CD8-positive, alpha-beta T cell (primary cell): ENCODE measurements at regions of chr15 and their contacts with region 1.

Region 1: GRCh38 chr15:101258238-101259144 is 6.6 kb upstream of the CHSY1 start:
- DNase-seq: peak in 7 of 9 experiments; percentile 43 to 80 (median 60)
- ATAC-seq: peak; percentile 71
- H3K4me3 ChIP-seq: no peak overlapping the region
- H3K4me3 Mint-ChIP-seq: no peak overlapping the region
- H3K27ac ChIP-seq: no peak overlapping the region
- H3K27ac Mint-ChIP-seq: no peak overlapping the region
- H3K4me1 ChIP-seq: no peaks in the 10 kb centered on the region
- H3K4me1 Mint-ChIP-seq: peaks cover 2% of the 10 kb centered on the region
- H3K27me3 ChIP-seq: no peaks in the 10 kb centered on the region
- H3K27me3 Mint-ChIP-seq: peaks cover 15% of the 10 kb centered on the region
- CTCF ChIP-seq: peak; percentile 90

Region 2: GRCh38 chr15:100627789-100628395 is 630.6 kb before region 1 on chr15:
- CTCF ChIA-PET with region 1: interaction called, 3 read pairs
- POLR2A ChIA-PET with region 1: interaction called, 4 read pairs
- intact Hi-C with region 1: loop called in 1 of 2 experiments (anchors 2 kb)
- DNase-seq: peak; percentile 27 to 81 (median 65)
- ATAC-seq: peak; percentile 96
- H3K4me3 ChIP-seq: no peak overlapping the region
- H3K4me3 Mint-ChIP-seq: no peak overlapping the region
- H3K27ac ChIP-seq: no peak overlapping the region
- H3K27ac Mint-ChIP-seq: no peak overlapping the region
- H3K4me1 ChIP-seq: no peaks in the 10 kb centered on the region
- H3K4me1 Mint-ChIP-seq: peaks cover 31% of the 10 kb centered on the region
- H3K27me3 ChIP-seq: no peaks in the 10 kb centered on the region
- H3K27me3 Mint-ChIP-seq: no peaks in the 10 kb centered on the region
- CTCF ChIP-seq: peak; percentile 81

Region 3: DNA sequence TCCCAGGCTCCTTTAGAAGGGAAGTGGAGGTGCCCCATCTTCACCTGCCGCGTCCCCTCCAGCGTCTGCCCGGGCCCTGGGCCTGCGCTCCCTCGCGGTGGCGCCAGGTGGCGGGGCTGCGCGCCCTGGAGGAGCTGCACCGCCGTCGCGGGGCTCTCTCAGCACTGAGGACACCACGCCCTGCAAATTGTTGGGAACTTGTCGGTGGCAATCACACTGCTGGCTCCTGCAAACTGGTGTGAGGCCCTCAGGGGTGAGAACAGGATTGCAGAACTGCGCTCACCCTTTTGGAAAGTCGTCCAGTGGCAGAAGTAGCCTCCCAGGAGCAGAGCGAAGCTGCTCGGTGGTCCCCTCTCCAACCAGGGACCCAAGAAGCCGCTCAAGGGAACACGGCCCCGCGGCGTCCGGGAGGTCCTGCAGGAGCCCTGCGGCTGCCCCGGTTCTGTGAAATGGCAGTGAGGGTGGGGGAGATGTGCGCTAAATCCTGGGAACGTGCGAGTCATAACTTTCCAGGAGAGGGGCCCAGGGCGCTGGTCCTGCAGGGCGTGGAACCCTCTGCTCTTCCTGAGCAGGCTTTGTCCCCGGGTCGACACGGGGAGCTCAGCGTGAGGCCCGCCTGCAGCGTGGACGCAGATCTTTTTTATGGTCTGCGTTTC is 340.3 kb before region 1 on chr15:
- CTCF ChIA-PET with region 1: interaction called, 4 read pairs
- POLR2A ChIA-PET with region 1: no interaction called
- intact Hi-C with region 1: loop called in 1 of 2 experiments (anchors 5 kb)
- DNase-seq: peak; percentile 24 to 72 (median 56)
- ATAC-seq: peak; percentile 95
- H3K4me3 ChIP-seq: peak overlapping the region; percentile 33 to 67
- H3K4me3 Mint-ChIP-seq: peak overlapping the region; percentile 83
- H3K27ac ChIP-seq: no peak overlapping the region
- H3K27ac Mint-ChIP-seq: no peak overlapping the region
- H3K4me1 ChIP-seq: peaks cover 8% of the 10 kb centered on the region
- H3K4me1 Mint-ChIP-seq: peaks cover 18% of the 10 kb centered on the region
- H3K27me3 ChIP-seq: peaks cover 0 to 14% of the 10 kb centered on the region in 2 experiments
- H3K27me3 Mint-ChIP-seq: peaks cover 66% of the 10 kb centered on the region
- CTCF ChIP-seq: peak; percentile 71

Region 4: DNA sequence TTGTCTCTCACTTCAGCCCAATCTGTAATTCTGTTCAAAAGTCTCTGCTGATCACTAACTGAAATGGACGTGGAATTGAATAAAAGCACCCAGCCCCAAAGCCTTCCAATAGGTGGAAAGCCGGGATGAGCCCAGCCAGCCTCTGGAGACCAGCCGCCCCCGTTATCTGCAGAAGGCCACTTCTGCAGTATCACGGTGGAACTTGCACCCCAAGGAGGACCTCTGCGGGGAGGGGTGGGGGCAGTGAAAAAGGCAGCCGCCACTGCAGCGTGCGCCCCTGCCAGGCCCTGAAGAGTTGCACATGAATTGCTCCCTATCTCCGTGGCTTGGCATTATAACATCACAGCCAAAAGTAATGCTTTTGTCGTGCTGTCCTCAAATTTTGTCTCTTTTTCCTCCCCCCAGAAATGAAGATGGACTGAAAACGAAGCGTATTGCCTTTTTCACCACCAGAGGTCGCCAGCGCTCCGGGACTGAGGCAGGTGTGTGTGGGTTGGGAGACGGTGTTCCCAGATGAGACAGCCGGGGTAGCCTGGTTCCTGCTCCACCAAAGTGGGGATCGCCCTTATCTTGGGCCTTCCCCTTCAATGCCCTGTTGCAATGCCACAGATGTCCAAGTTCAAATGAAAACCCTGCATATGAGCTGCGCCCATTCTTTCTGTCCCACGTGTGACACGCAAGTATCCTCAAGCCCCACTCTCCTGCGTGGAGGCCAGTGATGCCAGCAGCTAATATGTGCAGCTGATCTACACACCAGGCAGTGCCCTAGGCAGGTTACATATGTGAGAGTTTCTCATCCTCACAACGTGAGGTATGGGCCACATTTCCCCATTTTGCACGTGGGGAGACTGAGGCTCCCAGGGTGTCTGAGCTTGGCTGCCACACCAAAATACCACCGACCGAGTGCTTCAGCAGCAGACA is 243.3 kb before region 1 on chr15:
- CTCF ChIA-PET with region 1: interaction called, 22 read pairs
- POLR2A ChIA-PET with region 1: no interaction called
- intact Hi-C with region 1: loop called (anchors 1 kb)
- DNase-seq: peak; percentile 17 to 78 (median 68)
- ATAC-seq: peak; percentile 42
- H3K4me3 ChIP-seq: no peak overlapping the region
- H3K4me3 Mint-ChIP-seq: no peak overlapping the region
- H3K27ac ChIP-seq: no peak overlapping the region
- H3K27ac Mint-ChIP-seq: no peak overlapping the region
- H3K4me1 ChIP-seq: no peaks in the 10 kb centered on the region
- H3K4me1 Mint-ChIP-seq: no peaks in the 10 kb centered on the region
- H3K27me3 ChIP-seq: no peaks in the 10 kb centered on the region
- H3K27me3 Mint-ChIP-seq: peaks cover 9% of the 10 kb centered on the region
- CTCF ChIP-seq: peak; percentile 73

Region 5: GRCh38 chr15:101088788-101089583 is 169.5 kb before region 1 on chr15:
- CTCF ChIA-PET with region 1: interaction called, 173 read pairs
- POLR2A ChIA-PET with region 1: no interaction called
- intact Hi-C with region 1: loop called (anchors 1 kb)
- DNase-seq: peak; percentile 64 to 89 (median 76)
- ATAC-seq: peak; percentile 98
- H3K4me3 ChIP-seq: no peak overlapping the region
- H3K4me3 Mint-ChIP-seq: no peak overlapping the region
- H3K27ac ChIP-seq: no peak overlapping the region
- H3K27ac Mint-ChIP-seq: no peak overlapping the region
- H3K4me1 ChIP-seq: no peaks in the 10 kb centered on the region
- H3K4me1 Mint-ChIP-seq: peaks cover 1% of the 10 kb centered on the region
- H3K27me3 ChIP-seq: no peaks in the 10 kb centered on the region
- H3K27me3 Mint-ChIP-seq: no peaks in the 10 kb centered on the region
- CTCF ChIP-seq: peak; percentile 98

Region 6: DNA sequence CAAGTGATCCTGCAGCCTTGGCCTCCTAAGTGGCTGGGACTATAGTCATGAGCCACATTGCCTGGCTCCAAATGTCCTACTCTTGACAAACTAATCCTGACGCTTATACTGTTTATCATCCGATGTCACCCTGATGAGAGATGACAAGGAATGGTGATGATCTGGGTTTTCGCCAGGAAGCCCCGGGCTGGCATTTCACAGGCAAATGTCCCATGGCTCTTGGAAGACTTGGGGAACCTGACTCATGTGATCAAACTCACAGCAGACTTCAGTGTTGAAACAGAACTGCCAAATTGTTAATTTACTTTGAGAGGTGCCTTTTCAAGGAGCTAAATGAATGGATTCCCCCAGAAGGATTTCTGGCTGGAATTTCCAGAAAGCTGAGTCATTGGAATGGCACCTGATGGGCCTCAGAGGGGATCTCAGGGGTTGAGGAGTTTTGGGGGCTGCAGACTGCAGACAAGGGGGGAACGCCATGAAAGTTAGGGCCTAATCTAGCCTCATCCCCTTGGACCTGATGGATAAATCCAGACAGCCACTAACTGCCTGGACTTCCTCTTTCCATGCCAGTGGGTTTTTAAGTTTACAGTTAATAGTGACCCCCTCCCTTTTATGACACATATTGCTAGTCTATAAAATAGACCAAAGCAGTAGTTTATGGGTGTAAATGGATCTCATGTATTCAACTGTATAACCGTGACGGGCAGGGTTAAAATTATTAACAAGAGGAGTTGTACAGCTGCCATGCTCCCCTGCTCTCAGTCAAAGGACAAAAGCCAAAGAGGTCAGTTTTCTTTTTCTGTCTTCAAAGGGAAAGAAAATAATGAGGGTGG is 153.2 kb before region 1 on chr15:
- CTCF ChIA-PET with region 1: interaction called, 15 read pairs
- POLR2A ChIA-PET with region 1: no interaction called
- intact Hi-C with region 1: no loop called
- DNase-seq: no peak
- ATAC-seq: no peak
- H3K4me3 ChIP-seq: no peak overlapping the region
- H3K4me3 Mint-ChIP-seq: no peak overlapping the region
- H3K27ac ChIP-seq: no peak overlapping the region
- H3K27ac Mint-ChIP-seq: no peak overlapping the region
- H3K4me1 ChIP-seq: no peaks in the 10 kb centered on the region
- H3K4me1 Mint-ChIP-seq: no peaks in the 10 kb centered on the region
- H3K27me3 ChIP-seq: no peaks in the 10 kb centered on the region
- H3K27me3 Mint-ChIP-seq: no peaks in the 10 kb centered on the region
- CTCF ChIP-seq: no peak

Region 7: GRCh38 chr15:101159096-101159935 is 99.2 kb before region 1 on chr15:
- CTCF ChIA-PET with region 1: no interaction called
- POLR2A ChIA-PET with region 1: no interaction called
- intact Hi-C with region 1: no loop called
- DNase-seq: no peak
- ATAC-seq: no peak
- H3K4me3 ChIP-seq: no peak overlapping the region
- H3K4me3 Mint-ChIP-seq: no peak overlapping the region
- H3K27ac ChIP-seq: no peak overlapping the region
- H3K27ac Mint-ChIP-seq: no peak overlapping the region
- H3K4me1 ChIP-seq: no peaks in the 10 kb centered on the region
- H3K4me1 Mint-ChIP-seq: no peaks in the 10 kb centered on the region
- H3K27me3 ChIP-seq: no peaks in the 10 kb centered on the region
- H3K27me3 Mint-ChIP-seq: no peaks in the 10 kb centered on the region
- CTCF ChIP-seq: no peak

Region 8: DNA sequence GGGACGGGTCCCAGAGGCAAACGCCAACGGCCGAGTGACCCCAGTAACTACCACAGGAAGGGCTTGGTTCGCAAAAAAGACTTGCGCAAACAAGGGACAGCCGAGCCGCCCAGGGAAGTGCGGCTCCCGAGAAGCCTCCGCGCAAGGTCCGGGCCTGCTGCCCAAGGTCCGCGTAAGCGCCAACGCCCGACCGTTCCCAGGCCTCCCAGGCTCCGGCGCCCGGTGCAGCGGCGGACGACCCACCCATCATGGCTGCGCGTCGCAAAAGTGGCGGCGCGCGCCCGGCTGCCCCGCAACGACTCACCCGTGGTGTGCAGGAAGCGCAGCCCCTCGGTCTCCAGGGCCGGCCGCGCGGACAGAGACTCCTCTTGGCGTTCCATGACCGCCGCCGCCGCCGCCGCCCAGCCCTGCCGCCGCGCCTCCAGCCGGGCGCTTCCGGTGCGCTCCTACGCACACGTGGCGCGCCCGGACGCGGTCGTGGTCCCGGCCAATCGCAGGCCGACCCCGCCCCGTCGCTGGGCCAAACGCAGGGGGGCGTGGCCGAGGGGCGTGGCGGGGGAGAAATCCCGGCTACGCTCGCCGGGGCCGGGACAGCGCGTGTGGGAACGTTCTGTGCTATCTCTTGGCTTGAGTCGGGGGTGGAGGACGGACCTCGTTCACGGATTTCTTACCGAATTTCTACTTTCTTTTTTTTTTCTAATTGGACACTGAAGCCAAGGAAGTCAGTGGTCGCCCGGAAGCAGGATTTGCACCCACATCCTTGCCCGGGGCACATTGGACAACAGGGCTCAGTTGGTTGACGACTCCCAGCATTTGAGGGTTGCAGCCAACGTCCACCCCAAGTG is 18.8 kb after region 1 on chr15 and contains the start of gene SELENOS:
- CTCF ChIA-PET with region 1: interaction called, 11 read pairs
- POLR2A ChIA-PET with region 1: no interaction called
- intact Hi-C with region 1: no loop called
- DNase-seq: peak; percentile 62 to 94 (median 88)
- ATAC-seq: peak; percentile 93
- H3K4me3 ChIP-seq: peak within 1 kb of the TSS; percentile 75 to 77
- H3K4me3 Mint-ChIP-seq: peak within 1 kb of the TSS; percentile 95
- H3K27ac ChIP-seq: peak within 1 kb of the TSS; percentile 65 to 77
- H3K27ac Mint-ChIP-seq: peak within 1 kb of the TSS; percentile 93
- H3K4me1 ChIP-seq: peaks cover 16% of the 10 kb centered on the region
- H3K4me1 Mint-ChIP-seq: peaks cover 24% of the 10 kb centered on the region
- H3K27me3 ChIP-seq: no peaks in the 10 kb centered on the region
- H3K27me3 Mint-ChIP-seq: no peaks in the 10 kb centered on the region
- CTCF ChIP-seq: no peak
- total RNA-seq, gene SELENOS: 46.0 to 50.4 TPM

Region 9: GRCh38 chr15:101346928-101347327 is 88.4 kb after region 1 on chr15:
- CTCF ChIA-PET with region 1: no interaction called
- POLR2A ChIA-PET with region 1: no interaction called
- intact Hi-C with region 1: no loop called
- DNase-seq: no peak
- ATAC-seq: no peak
- H3K4me3 ChIP-seq: no peak overlapping the region
- H3K4me3 Mint-ChIP-seq: no peak overlapping the region
- H3K27ac ChIP-seq: no peak overlapping the region
- H3K27ac Mint-ChIP-seq: no peak overlapping the region
- H3K4me1 ChIP-seq: no peaks in the 10 kb centered on the region
- H3K4me1 Mint-ChIP-seq: no peaks in the 10 kb centered on the region
- H3K27me3 ChIP-seq: peaks cover 0 to 3% of the 10 kb centered on the region in 2 experiments
- H3K27me3 Mint-ChIP-seq: peaks cover 24% of the 10 kb centered on the region
- CTCF ChIP-seq: no peak